Activated naive CD8-positive, alpha-beta T cell treated with anti-CD3 and anti-CD28 coated beads, Interleukin-2, amount 10 ng/mL, durations not matched to agents 7 days and 5 days (primary cell): ENCODE measurements at regions of chr22 and their contacts with region 1.

Region 1: GRCh38 chr22:29267858-29268417 is at the starts of genes EWSR1 and RHBDD3:
- DNase-seq: peak; percentile 100
- ATAC-seq: peak; percentile 89
- H3K4me3 Mint-ChIP-seq: peak within 1 kb of the TSS; percentile 86
- H3K27ac Mint-ChIP-seq: peak within 1 kb of the TSS; percentile 95
- H3K4me1 Mint-ChIP-seq: peaks cover 35% of the 10 kb centered on the region
- H3K27me3 Mint-ChIP-seq: no peaks in the 10 kb centered on the region
- total RNA-seq, gene EWSR1: 284 to 302 TPM
- total RNA-seq, gene RHBDD3: 27.5 to 30.1 TPM

Region 2: DNA sequence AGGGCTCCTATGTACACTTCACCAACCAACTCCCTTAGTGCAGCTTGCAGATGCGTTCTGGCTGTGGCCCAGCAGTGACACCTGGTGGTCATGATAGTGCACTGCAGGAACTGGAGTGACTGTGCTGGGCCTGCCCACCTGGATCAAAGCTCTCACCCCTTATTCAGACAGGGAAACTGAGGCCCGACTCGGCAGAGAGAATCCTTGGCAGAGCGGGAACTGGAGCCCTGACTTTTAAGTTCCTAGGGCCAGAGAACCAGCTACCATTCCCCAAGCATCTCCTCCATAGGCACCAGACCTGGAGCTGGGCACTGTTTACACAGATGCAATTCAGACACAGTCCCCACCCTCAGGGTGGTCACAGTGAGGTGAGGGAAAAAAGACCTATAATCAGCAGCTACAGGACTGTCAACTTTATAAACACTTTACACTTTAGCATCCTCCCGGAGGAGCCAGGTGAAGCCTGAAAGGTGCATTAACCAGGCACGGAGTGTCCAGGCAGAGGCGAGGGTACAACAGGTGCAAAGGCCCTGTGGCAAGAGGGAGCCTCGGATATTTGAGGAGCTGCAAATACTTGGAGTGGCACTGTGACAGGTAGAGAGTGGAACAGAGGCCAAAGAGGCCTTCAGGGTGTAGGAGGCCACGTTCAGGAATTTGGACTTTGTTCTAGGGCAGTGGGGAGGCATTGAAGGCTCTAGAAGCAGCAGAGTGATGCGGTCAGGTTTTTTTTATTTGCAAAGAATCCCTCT is 22.1 kb before region 1 on chr22:
- POLR2A ChIA-PET with region 1: no interaction called
- DNase-seq: peak; percentile 77
- ATAC-seq: peak; percentile 86
- H3K4me3 Mint-ChIP-seq: no peak overlapping the region
- H3K27ac Mint-ChIP-seq: no peak overlapping the region
- H3K4me1 Mint-ChIP-seq: peaks cover 2% of the 10 kb centered on the region
- H3K27me3 Mint-ChIP-seq: peaks cover 24% of the 10 kb centered on the region

Region 3: GRCh38 chr22:29306175-29306834 is 38.4 kb after region 1 on chr22 and contains the start of gene GAS2L1:
- POLR2A ChIA-PET with region 1: interaction called, 11 read pairs
- DNase-seq: peak; percentile 78
- ATAC-seq: peak; percentile 57
- H3K4me3 Mint-ChIP-seq: peak within 1 kb of the TSS; percentile 87
- H3K27ac Mint-ChIP-seq: peak within 1 kb of the TSS; percentile 72
- H3K4me1 Mint-ChIP-seq: peaks cover 18% of the 10 kb centered on the region
- H3K27me3 Mint-ChIP-seq: peaks cover 6% of the 10 kb centered on the region
- total RNA-seq, gene GAS2L1: 8.1 to 9.3 TPM

Region 4: GRCh38 chr22:29320546-29320945 is 52.6 kb after region 1 on chr22:
- POLR2A ChIA-PET with region 1: no interaction called
- DNase-seq: no peak
- ATAC-seq: no peak
- H3K4me3 Mint-ChIP-seq: no peak overlapping the region
- H3K27ac Mint-ChIP-seq: no peak overlapping the region
- H3K4me1 Mint-ChIP-seq: peaks cover 1% of the 10 kb centered on the region
- H3K27me3 Mint-ChIP-seq: peaks cover 18% of the 10 kb centered on the region